ENCODE measurements at regions of chrX and their contacts with region 1.

Region 1: GRCh38 chrX:113315926-113316325 is 475.3 kb upstream of the AMOT start:
- DNase-seq: no peak
- ATAC-seq: no peak
- H3K4me3 ChIP-seq: no peak overlapping the region
- H3K27ac ChIP-seq: no peak overlapping the region
- H3K4me1 ChIP-seq: no peaks in the 10 kb centered on the region
- H3K27me3 ChIP-seq: no peaks in the 10 kb centered on the region
- CTCF ChIP-seq: no peak

Region 2: DNA sequence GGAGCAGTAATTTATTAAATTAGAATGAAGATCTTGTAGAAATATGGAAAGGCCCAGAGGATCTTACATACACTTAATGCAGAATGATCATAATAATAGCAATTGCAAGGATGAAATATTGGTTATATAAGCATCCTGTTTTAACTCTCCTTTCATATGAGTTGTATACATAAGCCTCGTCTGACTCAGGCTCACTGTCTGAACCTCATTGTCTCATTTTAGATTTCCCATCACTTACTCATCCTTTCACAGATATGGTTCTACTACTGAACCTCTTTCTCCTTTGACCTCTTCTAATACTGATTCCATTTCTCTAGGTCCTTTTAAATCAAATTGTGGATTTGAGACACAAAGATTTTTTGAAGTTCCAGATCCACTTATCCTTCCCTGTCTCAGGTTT is 956.0 kb before region 1 on chrX:
- intact Hi-C with region 1: no loop called
- DNase-seq: no peak
- ATAC-seq: no peak
- H3K4me3 ChIP-seq: no peak overlapping the region
- H3K27ac ChIP-seq: no peak overlapping the region
- H3K4me1 ChIP-seq: no peaks in the 10 kb centered on the region
- H3K27me3 ChIP-seq: peaks cover 0 to 10% (median 0%) of the 10 kb centered on the region in 7 donors
- CTCF ChIP-seq: no peak

Region 3: GRCh38 chrX:113260474-113260873 is 55.5 kb before region 1 on chrX:
- intact Hi-C with region 1: loop called in 1 of 10 experiments (anchors 10 kb)
- DNase-seq: no peak
- ATAC-seq: no peak
- H3K4me3 ChIP-seq: no peak overlapping the region
- H3K27ac ChIP-seq: no peak overlapping the region
- H3K4me1 ChIP-seq: no peaks in the 10 kb centered on the region
- H3K27me3 ChIP-seq: peaks cover 0 to 22% (median 0%) of the 10 kb centered on the region in 7 donors
- CTCF ChIP-seq: peak in 1 of 9 donors; percentile 13

Region 4: DNA sequence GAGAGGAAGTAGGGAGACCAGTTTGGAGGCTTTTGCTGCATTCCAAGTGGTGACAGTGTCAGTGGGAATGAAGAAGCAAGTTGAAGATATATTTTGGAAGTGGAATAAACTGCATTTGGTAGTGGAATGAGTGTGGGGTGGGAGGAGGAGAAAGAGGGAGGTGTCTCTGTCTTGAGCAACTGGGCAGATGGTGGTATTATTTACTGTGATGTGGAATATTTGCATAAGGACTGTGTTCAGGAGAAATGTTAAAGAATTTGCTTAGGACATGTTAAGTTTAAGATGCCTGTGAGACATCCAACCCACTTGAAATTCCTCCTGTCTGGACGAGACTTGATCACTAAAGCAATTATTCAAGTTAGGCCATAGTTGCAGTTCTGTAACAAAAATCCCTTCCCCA is 26.4 kb before region 1 on chrX:
- intact Hi-C with region 1: no loop called
- DNase-seq: no peak
- ATAC-seq: no peak
- H3K4me3 ChIP-seq: no peak overlapping the region
- H3K27ac ChIP-seq: no peak overlapping the region
- H3K4me1 ChIP-seq: no peaks in the 10 kb centered on the region
- H3K27me3 ChIP-seq: peaks cover 0 to 6% (median 0%) of the 10 kb centered on the region in 7 donors
- CTCF ChIP-seq: no peak

Region 5: DNA sequence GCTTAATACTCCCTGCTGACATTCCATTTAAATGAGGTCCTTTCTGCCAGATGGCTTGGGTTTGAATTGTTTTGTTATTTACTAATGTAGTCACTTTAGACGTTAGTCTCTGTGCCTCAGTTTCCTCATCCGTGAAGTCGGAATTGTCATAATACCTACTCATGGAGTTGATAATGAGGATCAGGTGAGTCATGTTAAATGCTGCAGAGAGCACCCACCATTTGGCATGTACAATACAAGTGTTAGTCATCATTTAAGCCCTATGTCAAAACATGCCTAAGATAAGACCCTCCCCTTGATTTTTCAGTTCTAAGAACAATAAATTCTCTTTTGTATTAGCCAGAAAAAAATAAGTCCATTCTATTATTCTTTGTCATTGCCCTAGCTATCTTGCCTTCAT is 733.1 kb after region 1 on chrX:
- intact Hi-C with region 1: no loop called
- DNase-seq: no peak
- ATAC-seq: no peak
- H3K4me3 ChIP-seq: no peak overlapping the region
- H3K27ac ChIP-seq: no peak overlapping the region
- H3K4me1 ChIP-seq: no peaks in the 10 kb centered on the region
- H3K27me3 ChIP-seq: no peaks in the 10 kb centered on the region
- CTCF ChIP-seq: no peak